ENCODE measurements at regions of chr21 and their contacts with region 1.

Region 1: DNA sequence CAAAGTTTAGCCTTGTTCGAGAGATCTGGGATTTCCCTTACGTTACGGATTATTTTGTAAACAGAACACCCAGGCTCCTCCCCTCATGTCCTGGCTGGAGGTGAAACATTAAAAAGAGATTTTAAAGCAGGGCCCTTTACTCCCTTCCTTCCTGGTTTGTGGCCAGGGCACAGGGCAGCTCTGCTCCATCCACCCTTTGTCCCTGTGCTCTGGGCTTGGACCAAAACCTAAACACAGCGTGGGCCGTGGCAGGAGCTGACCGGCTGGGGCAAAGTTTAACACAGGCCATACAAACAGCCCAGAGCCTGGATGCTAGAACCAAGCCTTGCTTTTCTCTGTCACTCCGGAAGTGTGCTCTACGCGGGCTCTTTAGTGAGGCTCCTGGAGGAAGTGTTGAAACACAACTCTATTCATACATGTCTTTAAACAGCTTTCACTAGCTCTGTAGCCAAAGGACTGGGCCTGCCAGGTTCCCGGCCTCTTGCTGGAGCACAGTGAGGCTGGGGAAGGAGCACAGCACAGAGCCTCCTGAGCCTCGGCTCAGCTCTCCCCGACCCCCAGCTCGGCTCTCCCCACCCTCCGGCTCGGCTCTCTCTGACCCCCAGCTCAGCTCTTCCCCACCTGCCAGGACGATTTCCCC is 84.7 kb downstream of the PDE9A start:
- DNase-seq: peak in 6 of 7 donors; percentile 6 to 67 (median 36)
- H3K4me3 ChIP-seq: no peak overlapping the region
- H3K27ac ChIP-seq: peak overlapping the region in 3 of 5 donors; percentile 1 to 79 (median 54)
- H3K4me1 ChIP-seq: peaks cover 0 to 14% of the 10 kb centered on the region in 2 donors
- H3K27me3 ChIP-seq: no peaks in the 10 kb centered on the region
- CTCF ChIP-seq: no peak
- POLR2A ChIP-seq: no peak

Region 2: DNA sequence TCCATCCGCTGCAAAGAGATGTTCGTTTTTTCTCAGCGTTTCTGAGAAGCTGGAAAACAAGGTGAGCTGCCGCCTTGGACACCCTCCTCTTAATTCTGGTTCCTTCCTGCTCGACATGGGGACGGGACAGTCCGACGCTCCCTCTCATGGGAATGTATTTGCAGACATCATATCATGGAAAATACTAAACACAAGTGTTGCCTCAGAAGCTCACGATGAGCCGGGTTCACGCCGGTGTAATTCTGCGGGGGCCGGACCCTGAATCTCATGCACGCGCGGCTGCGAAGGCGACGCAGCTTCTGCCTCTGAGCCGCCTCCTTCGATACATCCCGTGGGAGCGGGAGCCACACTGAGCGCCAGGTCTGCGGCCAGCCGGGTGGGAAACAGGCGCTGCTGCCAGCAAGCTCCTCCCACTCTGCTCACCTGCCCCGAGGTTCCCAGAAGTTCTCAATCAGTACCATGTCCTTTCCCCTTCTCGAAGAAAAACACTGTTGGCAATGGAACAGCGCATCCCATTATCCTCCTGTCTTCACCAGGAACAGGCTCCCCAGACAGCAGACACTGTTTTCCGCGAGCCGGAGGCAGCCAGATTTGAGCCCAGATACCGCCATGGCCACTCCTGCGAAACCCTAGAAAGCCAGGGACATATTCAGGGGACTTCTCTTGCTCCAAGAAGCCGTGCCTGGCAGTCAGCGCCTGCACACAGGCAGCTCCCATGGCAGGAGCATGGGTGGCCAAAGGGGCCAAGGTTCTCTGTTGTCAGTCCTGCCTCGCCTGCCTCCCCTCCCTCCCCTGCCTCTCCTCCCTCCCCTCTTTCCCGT is 43.3 kb after region 1 on chr21:
- intact Hi-C with region 1: loop called in 1 of 2 experiments (anchors 10 kb)
- DNase-seq: peak in 4 of 7 donors; percentile 28 to 50 (median 43)
- H3K4me3 ChIP-seq: peak overlapping the region in 1 of 4 donors; percentile 36
- H3K27ac ChIP-seq: peak overlapping the region in 1 of 5 donors; percentile 29
- H3K4me1 ChIP-seq: peaks cover 4 to 12% of the 10 kb centered on the region in 2 donors
- H3K27me3 ChIP-seq: no peaks in the 10 kb centered on the region
- CTCF ChIP-seq: no peak
- POLR2A ChIP-seq: no peak

Region 3: GRCh38 chr21:42799516-42799915 is 61.4 kb after region 1 on chr21:
- intact Hi-C with region 1: loop called in 1 of 2 experiments (anchors 10 kb)
- DNase-seq: no peak
- H3K4me3 ChIP-seq: no peak overlapping the region
- H3K27ac ChIP-seq: no peak overlapping the region
- H3K4me1 ChIP-seq: no peaks in the 10 kb centered on the region
- H3K27me3 ChIP-seq: no peaks in the 10 kb centered on the region
- CTCF ChIP-seq: no peak
- POLR2A ChIP-seq: no peak

Region 4: GRCh38 chr21:42818328-42818749 is 80.3 kb after region 1 on chr21:
- intact Hi-C with region 1: no loop called
- DNase-seq: peak; percentile 59 to 89 (median 72)
- H3K4me3 ChIP-seq: no peak overlapping the region
- H3K27ac ChIP-seq: no peak overlapping the region
- H3K4me1 ChIP-seq: no peaks in the 10 kb centered on the region
- H3K27me3 ChIP-seq: no peaks in the 10 kb centered on the region
- CTCF ChIP-seq: peak; percentile 71 to 93 (median 90)
- POLR2A ChIP-seq: no peak

Measured in adrenal gland (tissue), 19 donors.